BJ (cell line): ENCODE measurements at regions of chr3 and their contacts with region 1.

Region 1: DNA sequence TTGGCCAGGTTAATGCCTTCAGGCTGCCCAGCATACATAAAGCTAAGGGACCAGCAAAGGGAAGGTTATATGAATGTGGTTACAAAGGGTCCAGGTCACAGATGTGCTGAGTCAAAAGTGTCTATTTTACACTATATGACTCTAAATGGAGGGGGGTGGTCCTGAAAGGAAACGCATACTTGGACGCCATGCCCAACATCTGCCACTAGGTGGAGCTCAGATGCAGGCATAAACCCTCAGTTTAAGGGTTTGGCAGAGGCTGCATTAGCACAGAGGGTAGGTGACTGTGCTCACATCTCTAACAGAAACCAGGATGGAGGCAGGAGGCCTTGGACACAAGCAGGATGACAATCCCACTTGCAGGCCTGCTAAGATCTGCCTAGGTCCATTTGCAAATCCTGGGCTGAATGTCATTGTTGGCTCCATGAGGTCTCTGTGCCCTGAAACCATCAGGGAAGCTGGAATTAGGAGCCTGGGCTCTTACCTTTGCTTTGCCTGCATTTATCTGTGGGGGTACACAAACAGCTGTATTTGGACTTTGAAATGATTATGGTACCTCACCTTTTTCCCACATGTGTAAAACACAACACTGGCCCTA is 55.8 kb downstream of the ZNF621 start:
- DNase-seq: no peak
- H3K4me3 ChIP-seq: no peak overlapping the region
- H3K27me3 ChIP-seq: peaks cover 1% of the 10 kb centered on the region; the same call in 1 of the 2 replicates
- CTCF ChIP-seq: peak; percentile 98

Region 2: GRCh38 chr3:40452876-40453730 is 127.5 kb before region 1 on chr3:
- CTCF ChIA-PET with region 1: no interaction called
- POLR2A ChIA-PET with region 1: no interaction called
- DNase-seq: peak; percentile 95
- H3K4me3 ChIP-seq: peak overlapping the region; percentile 56
- H3K27me3 ChIP-seq: no peaks in the 10 kb centered on the region
- CTCF ChIP-seq: no peak

Region 3: DNA sequence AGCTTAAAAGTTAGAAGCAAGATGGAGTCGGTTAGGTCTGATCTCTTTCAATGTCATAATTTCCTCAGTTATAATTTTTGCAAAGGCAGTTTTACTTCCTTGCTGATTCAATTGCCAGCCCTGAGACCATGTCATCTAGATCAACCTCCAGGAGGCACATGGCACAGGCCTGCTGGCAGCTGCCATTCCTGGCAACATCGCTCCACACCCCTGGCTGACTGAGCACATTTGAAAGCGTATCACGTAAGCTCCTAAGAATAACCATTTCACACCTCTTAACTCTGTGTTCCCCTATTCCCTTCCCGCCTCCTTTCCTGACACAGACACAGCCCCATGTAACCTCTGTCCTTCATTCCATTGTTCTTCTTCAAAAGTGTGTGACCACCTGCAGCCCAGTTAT is 304.8 kb after region 1 on chr3:
- CTCF ChIA-PET with region 1: no interaction called
- POLR2A ChIA-PET with region 1: no interaction called
- DNase-seq: no peak
- H3K4me3 ChIP-seq: no peak overlapping the region
- H3K27me3 ChIP-seq: no peaks in the 10 kb centered on the region
- CTCF ChIP-seq: no peak

Region 4: GRCh38 chr3:41716471-41716870 is 1135.9 kb after region 1 on chr3:
- CTCF ChIA-PET with region 1: interaction called, 12 read pairs
- POLR2A ChIA-PET with region 1: no interaction called
- DNase-seq: no peak
- H3K4me3 ChIP-seq: no peak overlapping the region
- H3K27me3 ChIP-seq: no peaks in the 10 kb centered on the region
- CTCF ChIP-seq: peak; percentile 51

Region 5: DNA sequence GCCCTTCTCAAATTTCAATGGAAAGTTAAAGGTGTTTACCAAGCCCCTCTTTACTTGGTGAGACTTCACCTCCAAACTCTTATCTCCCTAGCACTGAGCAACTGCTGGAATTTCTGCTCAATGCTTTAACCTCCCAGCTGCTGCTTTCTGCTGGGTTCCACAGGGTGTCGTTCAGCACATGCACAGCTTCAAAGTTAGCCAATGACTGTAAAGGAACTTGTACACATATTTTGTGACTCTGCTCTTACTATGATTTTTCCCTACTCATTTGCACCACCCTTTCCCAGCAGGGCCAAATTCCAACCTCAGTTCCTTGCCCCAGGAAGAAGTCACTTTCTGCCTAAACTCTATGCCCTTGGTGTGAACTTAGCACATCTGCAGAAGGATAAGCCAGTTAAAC is 1291.6 kb after region 1 on chr3:
- CTCF ChIA-PET with region 1: interaction called, 10 read pairs
- POLR2A ChIA-PET with region 1: no interaction called
- DNase-seq: no peak
- H3K4me3 ChIP-seq: no peak overlapping the region
- H3K27me3 ChIP-seq: no peaks in the 10 kb centered on the region
- CTCF ChIP-seq: no peak

Region 6: GRCh38 chr3:41881233-41881821 is 1300.7 kb after region 1 on chr3:
- CTCF ChIA-PET with region 1: interaction called, 67 read pairs
- POLR2A ChIA-PET with region 1: no interaction called
- DNase-seq: no peak
- H3K4me3 ChIP-seq: no peak overlapping the region
- H3K27me3 ChIP-seq: no peaks in the 10 kb centered on the region
- CTCF ChIP-seq: peak; percentile 50